PC-3 (cell line): ENCODE measurements at regions of chr18 and their contacts with region 1.

Region 1: DNA sequence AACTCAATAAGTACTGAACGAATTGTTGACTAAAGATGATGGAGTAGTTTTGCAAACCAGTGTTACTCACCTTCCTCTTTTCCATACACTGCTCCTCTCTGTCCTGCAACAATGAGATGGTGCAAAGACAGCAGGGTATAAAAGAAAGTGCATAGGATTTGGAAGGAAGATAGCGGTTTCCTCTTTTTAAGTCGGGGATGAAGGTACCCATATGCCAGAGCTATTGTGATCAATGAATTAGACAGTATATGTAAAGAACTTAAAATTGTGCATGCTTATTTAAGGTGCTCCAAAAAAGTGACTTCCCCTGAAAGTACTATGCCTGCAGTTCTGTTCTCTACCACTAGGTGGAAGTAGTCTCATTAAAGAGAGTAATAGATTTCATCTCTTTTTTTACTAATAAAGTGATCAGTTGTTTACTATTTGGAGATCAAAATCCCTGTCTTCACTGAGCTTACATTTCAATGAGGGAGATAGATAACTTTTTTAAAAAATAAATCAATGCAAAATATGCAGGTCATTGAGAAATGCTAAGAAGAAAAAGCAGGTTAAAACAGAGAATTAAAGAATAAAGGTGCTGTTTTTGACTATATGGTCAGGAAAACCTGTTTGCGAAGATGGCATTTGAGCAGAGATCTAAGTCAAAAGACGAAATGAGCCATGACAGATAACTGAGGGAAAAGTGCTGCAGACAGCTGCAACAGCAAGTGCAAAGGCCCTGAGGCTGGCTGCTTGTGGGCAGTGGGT is 339.7 kb upstream of the SLC14A2 start:
- DNase-seq: peak; percentile 66
- ATAC-seq: no peak
- H3K4me3 ChIP-seq: no peak overlapping the region
- H3K27ac ChIP-seq: no peak overlapping the region
- H3K4me1 ChIP-seq: no peaks in the 10 kb centered on the region
- H3K27me3 ChIP-seq: no peaks in the 10 kb centered on the region
- CTCF ChIP-seq: peak; percentile 73

Region 2: GRCh38 chr18:45317948-45318640 is 42.6 kb after region 1 on chr18:
- CTCF ChIA-PET with region 1: no interaction called
- POLR2A ChIA-PET with region 1: no interaction called
- intact Hi-C with region 1: loop called (anchors 5 kb)
- DNase-seq: peak; percentile 4
- ATAC-seq: no peak
- H3K4me3 ChIP-seq: no peak overlapping the region
- H3K27ac ChIP-seq: no peak overlapping the region
- H3K4me1 ChIP-seq: no peaks in the 10 kb centered on the region
- H3K27me3 ChIP-seq: no peaks in the 10 kb centered on the region
- CTCF ChIP-seq: no peak

Region 3: DNA sequence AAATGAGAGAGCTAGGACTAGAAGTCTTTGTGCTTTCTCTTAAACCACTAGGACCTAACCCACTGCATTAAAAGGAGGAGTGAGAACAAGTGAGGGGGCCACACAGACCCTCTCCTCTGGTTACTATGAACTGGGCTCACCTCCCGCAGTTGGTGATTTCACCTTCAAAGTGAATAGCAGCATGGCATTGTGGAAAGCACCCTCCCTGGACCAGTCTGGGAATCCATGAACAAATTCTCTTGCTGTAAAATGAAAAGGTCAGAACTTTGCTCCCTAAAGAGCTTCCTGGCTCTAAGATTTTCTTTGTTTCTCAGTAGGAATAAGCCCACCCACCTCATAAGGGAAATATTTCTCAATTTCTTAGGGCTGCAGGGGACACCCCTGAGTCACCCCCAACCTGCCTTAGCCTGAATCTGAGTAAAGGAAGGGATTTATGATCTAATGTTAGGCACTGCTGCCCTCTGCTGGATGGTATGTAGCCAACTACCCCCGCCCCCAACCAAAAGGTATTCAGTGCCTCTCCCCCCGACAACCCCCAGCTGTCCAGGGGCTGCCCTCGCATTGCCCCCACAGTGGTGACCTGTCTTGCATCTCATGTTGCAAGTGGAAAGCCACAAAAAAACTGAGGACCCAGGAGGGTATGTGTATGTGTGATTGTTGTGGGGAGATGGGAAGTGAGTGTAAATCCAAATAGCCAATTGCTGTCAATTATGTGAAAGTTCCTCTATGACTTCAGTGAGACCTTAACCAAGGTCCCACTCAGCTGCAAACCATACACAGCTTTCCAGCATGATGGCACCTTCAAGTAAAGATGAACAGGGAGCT is 108.8 kb after region 1 on chr18:
- CTCF ChIA-PET with region 1: interaction called, 3 read pairs
- POLR2A ChIA-PET with region 1: no interaction called
- intact Hi-C with region 1: loop called (anchors 1 kb)
- DNase-seq: peak; percentile 51
- ATAC-seq: peak; percentile 46; the same call in 1 of the 2 replicates
- H3K4me3 ChIP-seq: no peak overlapping the region
- H3K27ac ChIP-seq: no peak overlapping the region
- H3K4me1 ChIP-seq: no peaks in the 10 kb centered on the region; the same call in 1 of the 2 replicates
- H3K27me3 ChIP-seq: no peaks in the 10 kb centered on the region
- CTCF ChIP-seq: peak; percentile 69

Region 4: GRCh38 chr18:45441110-45441842 is 165.7 kb after region 1 on chr18:
- CTCF ChIA-PET with region 1: no interaction called
- POLR2A ChIA-PET with region 1: no interaction called
- intact Hi-C with region 1: loop called (anchors 5 kb)
- DNase-seq: peak; percentile 46
- ATAC-seq: 0 out of 2 replicates have a peak, but pooled peaks have one; percentile 20
- H3K4me3 ChIP-seq: no peak overlapping the region
- H3K27ac ChIP-seq: no peak overlapping the region
- H3K4me1 ChIP-seq: no peaks in the 10 kb centered on the region
- H3K27me3 ChIP-seq: no peaks in the 10 kb centered on the region
- CTCF ChIP-seq: peak; percentile 59